Right ventricle myocardium superior (tissue), 1 donor: ENCODE measurements at regions of chr6 and their contacts with region 1.

Region 1: DNA sequence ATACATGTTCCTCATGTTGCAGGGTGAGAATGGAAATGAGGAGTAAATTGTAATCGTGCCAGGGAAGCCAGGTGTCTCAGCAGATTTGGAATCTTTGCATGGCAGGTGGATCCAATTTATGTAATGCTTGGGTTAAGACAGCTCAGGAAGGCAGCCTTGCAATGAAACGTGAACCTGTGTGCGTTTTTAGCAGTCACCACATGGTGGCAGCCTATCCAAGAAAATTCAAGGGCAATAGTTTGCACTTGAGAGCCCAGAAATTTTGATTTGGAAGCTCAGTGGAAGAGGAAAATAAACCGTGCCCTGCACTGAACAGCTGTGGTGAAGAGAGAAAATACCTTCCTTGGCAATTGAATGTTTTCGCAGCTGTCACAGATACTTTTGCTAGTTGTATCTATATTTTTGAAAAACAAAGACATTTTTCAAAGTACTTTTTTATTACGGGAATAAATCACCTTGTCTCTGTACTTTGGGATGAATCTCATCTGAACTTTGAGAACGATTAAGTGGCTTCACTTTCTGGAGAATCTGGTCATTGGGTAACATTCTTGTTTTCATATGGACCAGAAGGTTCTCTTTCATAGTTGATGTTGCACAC is 26.5 kb downstream of the MTHFD1L start:
- DNase-seq: peak; percentile 67
- ATAC-seq: peak; percentile 86

Region 2: DNA sequence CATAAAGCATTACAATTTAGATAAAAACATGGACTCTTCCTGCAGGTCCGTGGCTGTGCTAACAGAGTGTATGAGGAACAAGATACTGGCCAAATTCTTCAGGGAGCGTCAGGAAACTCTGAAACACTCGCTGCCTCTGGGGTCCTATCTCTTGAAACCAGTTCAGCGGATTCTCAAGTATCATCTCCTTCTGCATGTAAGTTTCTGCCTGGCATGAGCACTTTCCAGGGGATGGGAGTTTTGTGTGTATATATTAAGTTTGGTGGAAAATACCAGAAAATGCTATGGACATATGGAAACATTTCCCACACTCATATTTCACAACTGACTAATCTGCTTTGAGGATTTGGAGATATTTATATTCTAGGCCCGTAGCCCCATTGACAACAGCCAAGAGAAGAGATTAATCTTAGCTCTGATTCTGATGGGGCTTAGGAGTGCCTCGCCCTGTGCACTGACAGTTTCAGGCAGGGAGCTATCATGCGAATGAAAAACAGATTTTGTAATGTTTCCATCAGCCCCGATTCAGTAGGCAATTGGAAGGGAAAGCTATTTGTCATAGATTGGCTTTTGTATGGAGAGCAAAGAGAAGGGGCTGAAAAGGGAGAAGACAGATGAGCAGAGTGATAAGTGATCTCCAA is 91.2 kb before region 1 on chr6:
- intact Hi-C with region 1: no loop called
- DNase-seq: no peak
- ATAC-seq: peak; percentile 75

Region 3: GRCh38 chr6:150987371-150987828 is 95.4 kb after region 1 on chr6:
- intact Hi-C with region 1: no loop called
- DNase-seq: no peak
- ATAC-seq: no peak

Region 4: DNA sequence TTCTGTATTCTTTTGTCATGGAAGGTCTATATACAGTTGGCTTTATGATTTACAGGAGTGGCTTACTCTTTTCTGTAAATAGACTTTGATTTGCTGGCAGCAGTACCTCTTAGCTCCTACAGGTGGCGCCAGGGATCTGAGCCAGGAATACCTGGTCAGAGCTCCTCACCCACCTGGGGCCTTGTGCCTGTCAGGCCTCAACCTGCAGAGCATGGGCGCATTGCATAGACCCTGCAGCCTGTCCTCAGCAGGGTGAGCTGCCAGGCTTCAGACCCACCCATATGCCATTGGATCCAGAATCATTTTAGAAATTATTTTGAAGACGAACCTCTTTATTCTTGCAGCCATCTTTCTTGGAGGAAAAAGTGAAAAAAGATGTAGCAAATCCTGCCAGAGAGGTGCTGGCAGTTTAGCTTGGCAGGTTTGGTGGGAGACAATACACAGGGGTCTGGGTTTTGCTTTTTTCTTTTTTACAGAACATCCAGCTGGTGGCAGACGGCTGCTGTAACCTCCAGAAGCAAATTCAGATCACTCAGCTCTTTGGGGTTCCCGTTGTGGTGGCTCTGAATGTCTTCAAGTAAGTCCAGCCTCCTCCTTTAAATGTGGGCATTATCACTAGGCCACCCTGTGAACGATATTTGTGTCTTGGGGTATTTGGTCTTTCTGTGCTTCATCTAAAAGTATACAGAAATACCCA is 122.6 kb after region 1 on chr6:
- intact Hi-C with region 1: loop called (anchors 5 kb)
- DNase-seq: peak; percentile 74
- ATAC-seq: peak; percentile 81